ENCODE measurements at regions of chr1 and their contacts with region 1.

Region 1: DNA sequence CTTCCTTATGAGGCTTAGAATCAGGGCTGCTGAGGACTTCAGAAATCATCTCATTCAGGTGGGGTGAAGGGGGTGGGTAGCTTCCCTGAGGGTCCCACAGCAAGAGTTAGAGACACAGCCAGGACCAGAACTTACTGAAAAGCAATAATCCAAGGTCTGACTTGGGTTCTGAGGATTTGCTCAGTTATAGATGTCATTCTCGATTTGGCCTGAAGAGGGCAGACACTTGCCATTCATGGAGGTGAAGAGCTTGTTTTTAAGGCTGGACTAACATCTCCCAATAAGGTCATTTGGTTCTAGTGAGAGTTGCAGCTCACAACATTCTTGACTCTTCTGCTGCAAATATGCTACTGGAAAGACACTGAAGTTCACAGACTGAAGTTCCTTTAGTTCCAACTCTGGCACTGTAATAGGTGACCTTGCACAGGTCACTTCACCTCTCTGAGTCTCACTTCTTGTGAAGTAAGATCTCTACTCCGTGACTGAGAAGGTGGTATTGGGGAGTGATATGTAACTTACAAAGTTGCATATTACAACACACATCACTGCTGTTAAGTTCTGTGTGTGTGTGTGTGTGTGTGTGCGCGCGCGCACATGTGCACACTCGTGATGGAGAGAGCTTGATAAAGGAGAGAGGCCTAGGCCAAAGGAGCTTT is 69.8 kb upstream of the DIRAS3 start:
- DNase-seq: peak; percentile 71
- H3K4me3 Mint-ChIP-seq: no peak overlapping the region
- H3K27ac Mint-ChIP-seq: no peak overlapping the region
- H3K4me1 Mint-ChIP-seq: peaks cover 5% of the 10 kb centered on the region
- H3K27me3 Mint-ChIP-seq: no peaks in the 10 kb centered on the region
- CTCF ChIP-seq: peak; percentile 82

Region 2: GRCh38 chr1:67889953-67890567 is 230.2 kb before region 1 on chr1:
- CTCF ChIA-PET with region 1: no interaction called
- POLR2A ChIA-PET with region 1: no interaction called
- intact Hi-C with region 1: no loop called
- DNase-seq: peak; percentile 74
- H3K4me3 Mint-ChIP-seq: no peak overlapping the region
- H3K27ac Mint-ChIP-seq: no peak overlapping the region
- H3K4me1 Mint-ChIP-seq: peaks cover 15% of the 10 kb centered on the region
- H3K27me3 Mint-ChIP-seq: no peaks in the 10 kb centered on the region
- CTCF ChIP-seq: no peak

Region 3: GRCh38 chr1:67948151-67949080 is 171.8 kb before region 1 on chr1:
- CTCF ChIA-PET with region 1: no interaction called
- POLR2A ChIA-PET with region 1: no interaction called
- intact Hi-C with region 1: no loop called
- DNase-seq: no peak
- H3K4me3 Mint-ChIP-seq: no peak overlapping the region
- H3K27ac Mint-ChIP-seq: no peak overlapping the region
- H3K4me1 Mint-ChIP-seq: no peaks in the 10 kb centered on the region
- H3K27me3 Mint-ChIP-seq: no peaks in the 10 kb centered on the region
- CTCF ChIP-seq: no peak

Region 4: GRCh38 chr1:68141071-68142021 is 21.1 kb after region 1 on chr1:
- CTCF ChIA-PET with region 1: interaction called, 16 read pairs
- POLR2A ChIA-PET with region 1: no interaction called
- intact Hi-C with region 1: no loop called
- DNase-seq: no peak
- H3K4me3 Mint-ChIP-seq: no peak overlapping the region
- H3K27ac Mint-ChIP-seq: no peak overlapping the region
- H3K4me1 Mint-ChIP-seq: peaks cover 5% of the 10 kb centered on the region
- H3K27me3 Mint-ChIP-seq: no peaks in the 10 kb centered on the region
- CTCF ChIP-seq: no peak

Region 5: GRCh38 chr1:68197891-68198290 is 77.6 kb after region 1 on chr1:
- CTCF ChIA-PET with region 1: interaction called, 20 read pairs
- POLR2A ChIA-PET with region 1: no interaction called
- intact Hi-C with region 1: no loop called
- DNase-seq: peak; percentile 75
- H3K4me3 Mint-ChIP-seq: no peak overlapping the region
- H3K27ac Mint-ChIP-seq: peak overlapping the region; percentile 77
- H3K4me1 Mint-ChIP-seq: peaks cover 20% of the 10 kb centered on the region
- H3K27me3 Mint-ChIP-seq: no peaks in the 10 kb centered on the region
- CTCF ChIP-seq: no peak

Region 6: GRCh38 chr1:68331117-68331865 is 211.0 kb after region 1 on chr1:
- CTCF ChIA-PET with region 1: interaction called, 599 read pairs
- POLR2A ChIA-PET with region 1: no interaction called
- intact Hi-C with region 1: no loop called
- DNase-seq: peak; percentile 67
- H3K4me3 Mint-ChIP-seq: no peak overlapping the region
- H3K27ac Mint-ChIP-seq: peak overlapping the region; percentile 11
- H3K4me1 Mint-ChIP-seq: peaks cover 27% of the 10 kb centered on the region
- H3K27me3 Mint-ChIP-seq: no peaks in the 10 kb centered on the region
- CTCF ChIP-seq: no peak

Region 7: GRCh38 chr1:68442822-68443556 is 322.7 kb after region 1 on chr1:
- CTCF ChIA-PET with region 1: interaction called, 39 read pairs
- POLR2A ChIA-PET with region 1: no interaction called
- intact Hi-C with region 1: loop called (anchors 2 kb)
- DNase-seq: peak; percentile 82
- H3K4me3 Mint-ChIP-seq: no peak overlapping the region
- H3K27ac Mint-ChIP-seq: no peak overlapping the region
- H3K4me1 Mint-ChIP-seq: peaks cover 14% of the 10 kb centered on the region
- H3K27me3 Mint-ChIP-seq: no peaks in the 10 kb centered on the region
- CTCF ChIP-seq: peak; percentile 54

Measured in MCF 10A (cell line).